PC-3 (cell line): ENCODE measurements at regions of chr3 and their contacts with region 1.

Region 1: DNA sequence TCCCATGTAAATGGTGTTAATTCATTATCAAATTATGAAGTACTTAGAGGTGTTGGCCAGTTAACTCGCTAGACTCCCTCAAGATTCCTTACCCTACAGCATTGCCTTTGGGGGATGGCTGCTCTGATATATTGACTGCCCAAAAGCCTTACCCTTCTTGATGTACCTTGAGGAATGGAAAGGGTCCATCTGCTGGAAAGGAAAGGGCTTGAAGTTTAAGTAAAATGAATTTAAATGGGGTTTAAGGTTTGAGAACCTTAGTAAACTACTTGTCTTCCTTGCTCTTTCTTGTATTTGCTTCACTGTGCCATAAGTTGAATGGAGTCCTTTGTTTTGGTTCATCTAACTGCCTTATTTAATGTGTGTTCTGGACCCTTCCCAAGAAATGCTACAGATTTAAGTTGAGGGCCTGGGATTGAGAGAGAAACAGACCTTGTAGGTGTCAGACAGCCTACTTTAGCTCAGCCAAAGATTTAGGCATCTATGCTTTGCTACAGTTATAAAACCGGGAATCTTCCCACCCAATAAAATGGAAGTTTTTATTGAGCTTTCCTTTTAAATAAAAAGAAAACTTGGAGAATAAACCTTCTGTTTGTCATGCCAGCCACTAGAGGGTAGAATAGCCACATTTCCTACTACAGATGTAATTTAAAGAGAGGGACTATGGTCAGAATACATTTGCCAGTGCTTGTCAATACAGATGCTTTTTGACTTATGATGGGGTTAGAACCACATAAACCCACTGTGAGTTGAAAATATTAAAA is 25.3 kb downstream of the CMSS1 start:
- DNase-seq: peak; percentile 78
- ATAC-seq: peak; percentile 86
- H3K4me3 ChIP-seq: no peak overlapping the region
- H3K27ac ChIP-seq: 0 out of 2 replicates have a peak overlapping the region, but pooled peaks have one; percentile 2
- H3K4me1 ChIP-seq: peaks cover 25% of the 10 kb centered on the region
- H3K27me3 ChIP-seq: no peaks in the 10 kb centered on the region
- CTCF ChIP-seq: peak; percentile 91

Region 2: DNA sequence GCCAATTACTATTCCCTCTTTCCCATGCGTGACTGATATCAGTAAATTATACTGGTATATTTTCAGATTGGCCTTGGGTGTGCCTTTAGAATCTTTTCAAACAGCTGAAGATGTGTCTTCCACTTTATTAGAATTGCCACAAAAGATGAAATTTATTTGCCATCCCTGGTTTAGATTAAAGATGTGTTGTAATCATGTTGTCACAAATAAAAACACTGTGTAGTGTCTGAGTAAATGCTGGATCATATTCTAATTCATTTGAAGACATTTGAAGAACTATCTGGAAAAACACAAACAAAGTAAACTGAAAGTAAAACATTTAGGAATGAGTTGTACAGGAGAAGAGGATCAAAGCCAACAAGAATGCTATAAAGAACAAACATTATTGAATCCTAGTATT is 544.3 kb before region 1 on chr3:
- CTCF ChIA-PET with region 1: no interaction called
- POLR2A ChIA-PET with region 1: no interaction called
- intact Hi-C with region 1: no loop called
- DNase-seq: no peak
- ATAC-seq: no peak
- H3K4me3 ChIP-seq: no peak overlapping the region
- H3K27ac ChIP-seq: no peak overlapping the region
- H3K4me1 ChIP-seq: peaks cover 7% of the 10 kb centered on the region; the same call in 1 of the 2 replicates
- H3K27me3 ChIP-seq: no peaks in the 10 kb centered on the region
- CTCF ChIP-seq: no peak

Region 3: DNA sequence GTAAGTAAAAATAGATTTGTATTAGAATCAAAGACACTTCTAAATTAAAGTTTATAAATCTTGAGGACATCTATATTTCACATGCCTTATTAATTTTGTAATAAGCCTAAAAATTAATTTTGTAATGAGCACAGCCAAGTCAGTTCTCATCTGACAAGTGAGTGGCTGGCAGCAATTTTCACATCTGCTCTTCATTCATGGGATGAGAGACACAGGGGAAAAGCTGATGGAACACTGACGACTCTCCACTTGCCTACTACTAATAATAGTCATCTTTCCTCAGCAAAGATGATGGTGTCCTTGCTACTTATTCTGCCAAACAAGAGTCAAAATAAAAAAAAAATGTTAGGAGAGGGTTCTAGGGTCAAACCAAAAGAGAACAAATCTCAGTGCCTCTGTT is 39.7 kb before region 1 on chr3:
- CTCF ChIA-PET with region 1: no interaction called
- POLR2A ChIA-PET with region 1: no interaction called
- intact Hi-C with region 1: no loop called
- DNase-seq: no peak
- ATAC-seq: no peak
- H3K4me3 ChIP-seq: no peak overlapping the region
- H3K27ac ChIP-seq: no peak overlapping the region
- H3K4me1 ChIP-seq: no peaks in the 10 kb centered on the region
- H3K27me3 ChIP-seq: no peaks in the 10 kb centered on the region
- CTCF ChIP-seq: no peak

Region 4: GRCh38 chr3:99965077-99965476 is 122.1 kb after region 1 on chr3:
- CTCF ChIA-PET with region 1: interaction called, 3 read pairs
- POLR2A ChIA-PET with region 1: no interaction called
- intact Hi-C with region 1: loop called (anchors 2 kb)
- DNase-seq: peak; percentile 60
- ATAC-seq: peak; percentile 97
- H3K4me3 ChIP-seq: no peak overlapping the region
- H3K27ac ChIP-seq: peak overlapping the region; percentile 37
- H3K4me1 ChIP-seq: peaks cover 19% of the 10 kb centered on the region
- H3K27me3 ChIP-seq: no peaks in the 10 kb centered on the region
- CTCF ChIP-seq: no peak

Region 5: DNA sequence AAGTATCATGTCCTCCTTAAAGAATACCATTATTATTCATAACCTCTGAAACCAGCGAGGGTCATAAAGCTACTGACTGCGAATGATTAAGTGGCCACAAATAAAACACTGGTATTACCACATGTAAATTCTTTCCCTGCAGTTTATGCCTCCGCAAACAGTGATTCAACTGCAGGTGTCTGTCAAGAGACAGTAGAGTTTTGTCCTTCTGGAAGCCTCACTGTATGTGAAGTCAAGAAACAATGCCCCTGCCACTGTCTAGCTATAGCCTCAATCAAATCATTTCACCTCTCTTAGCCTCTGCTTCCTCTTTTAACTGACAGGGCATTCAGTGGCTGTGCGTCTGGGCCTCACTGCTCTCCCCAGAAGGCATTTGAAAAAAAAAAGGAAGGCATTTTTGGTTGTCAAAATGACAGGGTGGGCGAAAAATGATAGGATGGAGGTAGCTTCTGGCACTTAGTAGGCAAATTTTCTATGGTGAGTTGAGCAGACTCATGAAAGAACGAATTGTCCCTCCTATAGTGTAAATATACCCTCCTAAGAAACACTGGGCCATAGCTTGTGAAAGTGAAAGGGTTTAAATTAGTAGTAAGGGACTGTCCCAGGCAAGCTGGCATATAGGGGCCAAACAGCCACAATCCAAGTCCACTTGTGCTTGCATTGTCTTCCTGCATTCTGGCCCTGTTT is 204.6 kb after region 1 on chr3:
- CTCF ChIA-PET with region 1: interaction called, 13 read pairs
- POLR2A ChIA-PET with region 1: interaction called, 5 read pairs
- intact Hi-C with region 1: loop called (anchors 1 kb)
- DNase-seq: peak; percentile 98
- ATAC-seq: peak; percentile 96
- H3K4me3 ChIP-seq: peak overlapping the region; percentile 39
- H3K27ac ChIP-seq: peak overlapping the region; percentile 86
- H3K4me1 ChIP-seq: peaks cover 48% of the 10 kb centered on the region
- H3K27me3 ChIP-seq: no peaks in the 10 kb centered on the region
- CTCF ChIP-seq: no peak

Region 6: DNA sequence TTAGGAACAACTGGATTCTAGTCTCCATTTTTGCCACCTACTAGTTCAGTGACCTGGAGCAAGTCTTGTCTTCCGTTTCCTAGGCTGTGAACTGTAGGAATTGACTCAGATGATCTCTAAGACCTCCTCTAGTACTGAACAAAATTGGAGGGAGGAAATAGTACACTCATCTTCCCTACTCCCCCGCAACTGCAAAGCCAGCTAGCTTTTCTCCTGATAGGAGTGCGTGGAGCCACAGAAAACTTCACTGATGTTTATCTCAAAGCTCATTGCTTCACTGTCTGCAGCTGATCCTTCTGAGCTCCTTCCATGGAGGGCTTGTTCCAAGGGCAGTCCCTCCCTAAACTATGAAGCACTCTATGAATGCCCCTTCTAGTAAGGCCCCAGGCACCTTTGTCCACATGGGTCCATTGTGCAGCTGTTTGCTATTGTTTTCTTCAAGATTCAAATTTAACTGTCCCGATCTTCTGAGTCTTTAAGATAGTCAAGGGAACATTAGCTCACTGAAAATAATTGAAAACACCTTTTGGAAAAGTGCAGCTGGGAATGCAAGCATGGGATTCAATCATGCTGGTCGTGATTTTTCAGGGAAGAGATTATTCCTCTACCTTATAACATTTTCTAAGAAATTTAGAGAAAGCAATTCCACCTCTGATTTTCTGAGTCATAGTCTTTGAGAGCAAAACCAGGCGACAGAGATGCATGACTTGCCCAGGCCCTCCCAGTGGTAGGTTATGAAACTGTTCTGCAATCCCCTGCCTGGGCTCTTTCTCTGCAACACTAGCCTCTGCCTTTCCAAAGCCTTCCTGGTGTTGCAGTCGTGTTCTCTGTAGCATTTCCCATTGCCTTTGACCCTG is 247.0 kb after region 1 on chr3:
- CTCF ChIA-PET with region 1: no interaction called
- POLR2A ChIA-PET with region 1: no interaction called
- intact Hi-C with region 1: loop called (anchors 5 kb)
- DNase-seq: peak; percentile 67
- ATAC-seq: peak; percentile 26; the same call in 1 of the 2 replicates
- H3K4me3 ChIP-seq: no peak overlapping the region
- H3K27ac ChIP-seq: no peak overlapping the region
- H3K4me1 ChIP-seq: peaks cover 62% of the 10 kb centered on the region
- H3K27me3 ChIP-seq: no peaks in the 10 kb centered on the region
- CTCF ChIP-seq: peak; percentile 69

Region 7: GRCh38 chr3:100159331-100160153 is 316.5 kb after region 1 on chr3:
- CTCF ChIA-PET with region 1: no interaction called
- POLR2A ChIA-PET with region 1: no interaction called
- intact Hi-C with region 1: loop called (anchors 1 kb)
- DNase-seq: peak; percentile 87
- ATAC-seq: peak; percentile 77
- H3K4me3 ChIP-seq: peak overlapping the region; percentile 22; the same call in 1 of the 2 replicates
- H3K27ac ChIP-seq: peak overlapping the region; percentile 65
- H3K4me1 ChIP-seq: peaks cover 33% of the 10 kb centered on the region
- H3K27me3 ChIP-seq: no peaks in the 10 kb centered on the region
- CTCF ChIP-seq: no peak

Region 8: DNA sequence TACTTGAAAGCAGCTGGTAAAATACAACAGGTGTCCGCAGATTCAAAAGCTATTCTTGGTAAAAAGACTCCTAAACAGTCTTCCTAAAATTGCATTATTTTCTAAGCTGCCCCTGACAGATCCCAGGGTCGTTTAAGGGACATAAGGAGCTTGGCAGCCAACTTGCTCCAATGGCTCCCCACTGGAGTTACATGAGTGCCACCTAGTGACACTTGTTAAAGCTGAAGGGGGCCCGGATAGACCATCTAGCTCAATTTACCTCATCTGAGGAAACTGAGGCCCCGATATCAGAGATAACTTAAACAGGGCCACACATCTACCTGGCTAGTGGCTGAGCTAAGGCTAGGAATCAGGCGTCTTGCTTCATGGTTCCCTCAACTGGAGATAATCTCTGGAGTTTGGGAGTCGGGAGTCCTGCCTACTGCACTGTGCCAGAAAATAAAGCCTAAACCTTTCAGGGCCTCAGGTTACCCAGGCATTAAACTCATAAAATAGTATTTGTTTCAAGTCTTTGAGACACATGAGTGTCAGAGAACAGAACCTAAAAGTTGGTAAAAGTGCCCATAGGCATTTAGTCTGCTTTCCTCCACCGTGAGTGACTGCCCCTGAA is 411.3 kb after region 1 on chr3:
- CTCF ChIA-PET with region 1: interaction called, 10 read pairs
- POLR2A ChIA-PET with region 1: no interaction called
- intact Hi-C with region 1: loop called (anchors 1 kb)
- DNase-seq: peak; percentile 82
- ATAC-seq: peak; percentile 94
- H3K4me3 ChIP-seq: no peak overlapping the region
- H3K27ac ChIP-seq: no peak overlapping the region
- H3K4me1 ChIP-seq: peaks cover 20% of the 10 kb centered on the region
- H3K27me3 ChIP-seq: no peaks in the 10 kb centered on the region
- CTCF ChIP-seq: peak; percentile 97